Dendritic cell treated with granulocyte-macrophage colony-stimulating factor and Interleukin-4, amounts not matched to agents 40 ng/mL and 50 ng/mL, for 4 days (primary cell): ENCODE measurements at regions of chr7 and their contacts with region 1.

Region 1: DNA sequence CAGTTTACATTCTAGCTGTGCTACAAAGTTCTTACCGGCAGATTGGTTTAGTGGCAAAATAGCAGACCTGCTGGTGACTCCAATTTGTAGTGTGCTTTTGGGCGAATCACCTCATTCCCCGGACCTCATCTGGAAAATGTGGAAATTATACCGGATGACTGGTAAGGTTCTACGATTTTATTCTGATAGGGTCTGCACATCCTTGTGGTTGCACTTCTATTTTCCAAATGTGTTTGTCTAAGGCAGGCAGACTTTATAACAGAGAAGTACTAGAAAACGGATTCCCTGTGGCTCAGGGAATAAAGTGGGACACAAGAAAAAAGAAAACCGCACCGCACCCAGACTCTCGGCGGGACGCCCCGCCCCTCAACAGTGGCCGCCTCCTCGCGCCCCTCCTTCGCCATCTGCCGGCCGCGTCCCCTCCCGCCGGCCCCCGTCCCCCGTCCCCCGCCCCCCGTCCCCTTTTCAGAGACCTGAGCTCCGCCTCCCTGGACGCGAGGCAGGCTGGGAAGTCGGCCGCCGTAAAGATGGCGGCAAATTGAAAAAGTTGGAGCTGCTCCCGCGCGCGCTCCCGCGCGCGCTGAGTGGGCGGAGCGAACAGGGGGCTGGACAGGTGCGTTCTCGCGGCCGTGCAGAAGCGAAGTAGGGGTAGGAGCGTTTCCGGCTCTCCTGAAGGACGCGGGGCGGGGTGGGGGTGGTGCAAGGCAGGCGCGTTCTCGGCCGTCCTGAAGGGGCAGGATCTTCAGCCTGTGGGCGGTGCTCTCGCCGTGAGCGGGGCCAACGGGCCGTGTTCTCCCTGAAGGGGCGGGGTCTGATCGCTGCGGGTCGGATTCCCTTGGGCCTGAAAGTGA is 531 bp upstream of the CCM2 start:
- H3K4me3 Mint-ChIP-seq: peak overlapping the region; percentile 87
- H3K27ac Mint-ChIP-seq: peak overlapping the region; percentile 95
- H3K4me1 Mint-ChIP-seq: peaks cover 43% of the 10 kb centered on the region
- H3K27me3 Mint-ChIP-seq: no peaks in the 10 kb centered on the region

Region 2: GRCh38 chr7:44521347-44522095 is 477.9 kb before region 1 on chr7:
- intact Hi-C with region 1: no loop called
- H3K4me3 Mint-ChIP-seq: no peak overlapping the region
- H3K27ac Mint-ChIP-seq: no peak overlapping the region
- H3K4me1 Mint-ChIP-seq: no peaks in the 10 kb centered on the region
- H3K27me3 Mint-ChIP-seq: peaks cover 1% of the 10 kb centered on the region

Region 3: DNA sequence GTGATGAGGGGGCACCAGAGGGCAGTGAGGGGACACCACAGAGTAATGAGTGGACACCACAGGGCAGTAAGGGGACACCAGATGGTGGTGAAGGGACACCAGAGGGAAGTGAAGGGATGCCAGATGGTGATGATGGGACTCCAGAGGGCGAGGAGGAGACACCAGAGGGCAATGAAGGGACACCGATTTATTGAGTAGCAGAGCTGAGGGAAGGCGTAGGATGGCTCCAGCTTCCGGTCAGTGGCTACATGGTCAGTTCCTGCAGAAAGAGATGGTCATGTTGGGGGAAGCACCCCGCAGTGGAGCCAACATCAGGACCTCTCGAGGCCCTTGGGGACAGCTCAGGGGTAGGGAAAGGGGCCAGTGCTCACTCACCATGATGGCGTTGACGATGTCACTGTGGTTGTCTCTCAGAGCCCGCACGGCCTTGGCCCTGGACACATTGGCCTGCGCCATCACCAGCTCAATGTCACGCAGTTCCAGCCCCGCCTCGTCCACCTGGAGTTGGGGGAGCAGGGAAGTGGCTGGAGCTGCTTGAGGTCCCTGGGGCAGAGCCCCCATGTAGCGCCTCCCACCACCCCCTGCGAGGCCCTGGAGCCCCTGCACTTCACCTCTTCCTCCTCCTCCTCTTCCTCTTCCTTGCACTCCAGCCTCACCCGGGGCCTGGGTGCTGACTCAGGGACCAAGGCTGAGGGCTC is 80.9 kb after region 1 on chr7:
- intact Hi-C with region 1: no loop called
- H3K4me3 Mint-ChIP-seq: no peak overlapping the region
- H3K27ac Mint-ChIP-seq: peak overlapping the region; percentile 29
- H3K4me1 Mint-ChIP-seq: peaks cover 18% of the 10 kb centered on the region
- H3K27me3 Mint-ChIP-seq: no peaks in the 10 kb centered on the region

Region 4: GRCh38 chr7:45111298-45112223 is 112.1 kb after region 1 on chr7 and contains the start of gene TBRG4:
- intact Hi-C with region 1: loop called (anchors 1 kb)
- H3K4me3 Mint-ChIP-seq: peak within 1 kb of the TSS; percentile 92
- H3K27ac Mint-ChIP-seq: peak within 1 kb of the TSS; percentile 97
- H3K4me1 Mint-ChIP-seq: peaks cover 44% of the 10 kb centered on the region
- H3K27me3 Mint-ChIP-seq: no peaks in the 10 kb centered on the region